ENCODE measurements at regions of chr20 and their contacts with region 1.

Region 1: DNA sequence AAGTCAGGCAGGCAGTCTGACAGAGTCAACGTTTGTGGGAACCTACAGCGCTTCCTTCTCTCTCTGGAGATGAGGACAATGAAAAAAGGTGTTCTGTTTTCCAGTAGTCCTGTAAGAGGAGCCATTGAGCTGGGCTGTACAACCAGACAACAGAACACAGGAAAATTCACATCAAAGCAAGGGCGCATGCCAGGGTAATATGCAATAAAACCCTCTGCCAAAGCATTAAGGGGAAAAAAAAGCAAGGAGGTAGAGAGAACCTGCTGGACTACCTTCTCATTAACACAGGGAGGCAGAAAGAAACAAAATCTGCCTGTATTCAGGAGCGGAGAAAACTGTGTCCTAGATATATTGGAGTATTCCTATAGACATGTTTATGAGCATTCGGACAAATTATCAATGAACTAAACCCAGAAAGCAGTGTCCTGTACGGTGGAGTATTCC is 1.3 kb downstream of the RNF24 start:
- DNase-seq: peak in 3 of 6 donors; percentile 66 to 72 (median 71)
- ATAC-seq: peak; percentile 51 to 81 (median 77)
- H3K4me3 ChIP-seq: peak overlapping the region in 2 of 4 donors; percentile 1 to 85
- H3K27ac ChIP-seq: peak overlapping the region in 2 of 4 donors; percentile 64 to 66
- H3K4me1 ChIP-seq: peaks cover 3 to 28% (median 6%) of the 10 kb centered on the region in 3 donors
- H3K27me3 ChIP-seq: no peaks in the 10 kb centered on the region
- CTCF ChIP-seq: peak in 3 of 4 donors; percentile 20 to 40 (median 33)

Region 2: GRCh38 chr20:3340443-3340842 is 673.6 kb before region 1 on chr20:
- intact Hi-C with region 1: no loop called
- DNase-seq: peak; percentile 72 to 92 (median 78)
- ATAC-seq: peak; percentile 86 to 96 (median 92)
- H3K4me3 ChIP-seq: no peak overlapping the region
- H3K27ac ChIP-seq: peak overlapping the region in 3 of 4 donors; percentile 30 to 66 (median 53)
- H3K4me1 ChIP-seq: peaks cover 0 to 8% (median 4%) of the 10 kb centered on the region in 3 donors
- H3K27me3 ChIP-seq: no peaks in the 10 kb centered on the region
- CTCF ChIP-seq: no peak

Region 3: GRCh38 chr20:4073852-4074741 is 60.0 kb after region 1 on chr20:
- intact Hi-C with region 1: loop called in 1 of 3 experiments (anchors 5 kb)
- DNase-seq: no peak
- ATAC-seq: no peak
- H3K4me3 ChIP-seq: no peak overlapping the region
- H3K27ac ChIP-seq: no peak overlapping the region
- H3K4me1 ChIP-seq: peaks cover 0 to 4% (median 0%) of the 10 kb centered on the region in 3 donors
- H3K27me3 ChIP-seq: no peaks in the 10 kb centered on the region
- CTCF ChIP-seq: no peak

Region 4: GRCh38 chr20:4089756-4090487 is 75.9 kb after region 1 on chr20:
- intact Hi-C with region 1: loop called in 2 of 3 experiments (anchors 5 kb)
- DNase-seq: no peak
- ATAC-seq: no peak
- H3K4me3 ChIP-seq: no peak overlapping the region
- H3K27ac ChIP-seq: no peak overlapping the region
- H3K4me1 ChIP-seq: peaks cover 0 to 6% (median 0%) of the 10 kb centered on the region in 3 donors
- H3K27me3 ChIP-seq: no peaks in the 10 kb centered on the region
- CTCF ChIP-seq: no peak

Measured in pancreas (tissue), 10 donors.